Activated CD4-positive, alpha-beta T cell treated with anti-CD3 and anti-CD28 coated beads for 36 hours (primary cell): ENCODE measurements at regions of chr5 and their contacts with region 1.

Region 1: GRCh38 chr5:77076961-77077823 is 9.9 kb downstream of the ZBED3 start:
- DNase-seq: peak; percentile 82
- ATAC-seq: peak; percentile 84
- H3K4me3 Mint-ChIP-seq: peak overlapping the region; percentile 31
- H3K27ac Mint-ChIP-seq: no peak overlapping the region
- H3K4me1 Mint-ChIP-seq: peaks cover 11% of the 10 kb centered on the region
- H3K27me3 Mint-ChIP-seq: no peaks in the 10 kb centered on the region

Region 2: DNA sequence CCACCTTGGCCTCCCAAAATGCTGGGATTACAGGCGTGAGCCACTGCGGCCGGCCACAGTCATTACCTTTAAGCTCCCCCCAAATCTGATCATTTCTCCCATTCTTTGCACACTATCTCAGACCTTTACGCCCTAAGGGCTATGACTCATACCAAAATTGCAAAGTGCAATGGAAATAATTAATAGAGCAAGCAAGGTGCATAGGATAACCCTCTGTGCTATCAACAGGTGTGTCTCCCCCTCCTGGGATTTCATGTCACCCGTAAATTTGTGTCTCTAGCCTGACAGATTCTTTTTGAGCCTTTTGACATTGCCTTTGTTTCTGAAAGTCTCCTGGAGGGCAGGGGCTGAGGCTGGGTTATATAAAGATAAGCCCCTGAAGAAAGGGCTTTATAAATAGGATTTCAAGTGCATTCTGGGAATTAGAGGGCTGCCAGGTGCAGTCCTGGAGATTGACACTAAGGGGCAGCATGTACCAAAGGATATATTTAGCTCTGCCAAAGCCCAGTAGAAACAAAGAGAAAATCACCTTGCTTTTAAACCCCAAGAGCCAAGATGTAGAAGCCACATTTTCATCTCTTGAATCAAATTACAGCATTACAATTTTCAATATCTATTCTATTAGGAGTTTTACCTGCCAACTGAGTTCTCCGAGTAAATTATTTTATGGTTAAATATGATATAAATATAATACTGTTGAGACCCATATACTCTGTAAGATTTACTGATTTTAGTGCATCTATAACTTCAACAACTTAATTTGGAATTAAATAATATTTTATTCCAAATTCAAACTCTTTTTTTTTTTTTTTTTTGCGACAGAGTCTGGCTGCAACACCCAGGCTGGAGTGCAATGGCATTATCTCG is 209.1 kb before region 1 on chr5:
- CTCF ChIA-PET with region 1: interaction called, 7 read pairs
- POLR2A ChIA-PET with region 1: no interaction called
- intact Hi-C with region 1: loop called (anchors 1 kb)
- DNase-seq: peak; percentile 77
- ATAC-seq: peak; percentile 74
- H3K4me3 Mint-ChIP-seq: no peak overlapping the region
- H3K27ac Mint-ChIP-seq: no peak overlapping the region
- H3K4me1 Mint-ChIP-seq: no peaks in the 10 kb centered on the region
- H3K27me3 Mint-ChIP-seq: no peaks in the 10 kb centered on the region

Region 3: DNA sequence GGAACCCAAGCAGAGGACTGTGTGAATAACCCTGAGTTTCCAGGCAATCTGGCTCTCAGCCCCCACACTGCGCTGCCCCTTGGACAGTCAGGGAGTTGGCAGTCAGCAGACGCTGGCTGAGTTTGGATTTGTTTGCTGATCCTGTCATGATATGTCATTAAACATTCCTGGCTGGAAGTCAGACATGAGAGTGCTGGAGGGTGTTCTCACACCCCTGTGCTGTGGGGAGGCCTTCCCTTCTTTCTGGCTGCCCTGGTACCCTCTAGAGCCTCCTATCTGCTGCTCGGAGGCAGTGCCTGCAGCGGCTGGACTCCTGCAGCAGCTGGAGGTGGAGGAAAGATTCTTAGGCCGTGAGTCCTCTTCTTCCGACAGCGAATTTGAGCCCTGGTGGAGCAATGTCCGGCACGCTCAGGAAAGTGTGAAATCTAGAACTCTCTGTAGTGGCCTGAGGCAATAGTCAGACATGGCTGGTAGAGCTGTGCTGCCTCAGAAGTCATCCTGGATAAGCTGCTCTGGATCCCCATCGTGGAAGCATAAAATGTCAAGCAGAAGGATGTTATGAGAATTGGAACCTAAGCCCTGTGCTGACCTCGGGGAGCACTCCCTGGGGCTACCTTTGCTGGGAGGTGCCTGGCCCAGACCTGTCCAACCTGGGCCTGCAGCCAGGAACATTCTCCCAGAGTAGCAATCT is 205.3 kb after region 1 on chr5:
- CTCF ChIA-PET with region 1: no interaction called
- POLR2A ChIA-PET with region 1: no interaction called
- intact Hi-C with region 1: no loop called
- DNase-seq: no peak
- ATAC-seq: no peak
- H3K4me3 Mint-ChIP-seq: no peak overlapping the region
- H3K27ac Mint-ChIP-seq: no peak overlapping the region
- H3K4me1 Mint-ChIP-seq: peaks cover 7% of the 10 kb centered on the region
- H3K27me3 Mint-ChIP-seq: peaks cover 2% of the 10 kb centered on the region

Region 4: GRCh38 chr5:77816671-77817070 is 739.5 kb after region 1 on chr5:
- CTCF ChIA-PET with region 1: no interaction called
- POLR2A ChIA-PET with region 1: no interaction called
- intact Hi-C with region 1: no loop called
- DNase-seq: no peak
- ATAC-seq: no peak
- H3K4me3 Mint-ChIP-seq: no peak overlapping the region
- H3K27ac Mint-ChIP-seq: no peak overlapping the region
- H3K4me1 Mint-ChIP-seq: no peaks in the 10 kb centered on the region
- H3K27me3 Mint-ChIP-seq: no peaks in the 10 kb centered on the region

Region 5: GRCh38 chr5:77832166-77832770 is 755.1 kb after region 1 on chr5:
- CTCF ChIA-PET with region 1: no interaction called
- POLR2A ChIA-PET with region 1: no interaction called
- intact Hi-C with region 1: no loop called
- DNase-seq: no peak
- ATAC-seq: no peak
- H3K4me3 Mint-ChIP-seq: no peak overlapping the region
- H3K27ac Mint-ChIP-seq: no peak overlapping the region
- H3K4me1 Mint-ChIP-seq: no peaks in the 10 kb centered on the region
- H3K27me3 Mint-ChIP-seq: peaks cover 11% of the 10 kb centered on the region

Region 6: DNA sequence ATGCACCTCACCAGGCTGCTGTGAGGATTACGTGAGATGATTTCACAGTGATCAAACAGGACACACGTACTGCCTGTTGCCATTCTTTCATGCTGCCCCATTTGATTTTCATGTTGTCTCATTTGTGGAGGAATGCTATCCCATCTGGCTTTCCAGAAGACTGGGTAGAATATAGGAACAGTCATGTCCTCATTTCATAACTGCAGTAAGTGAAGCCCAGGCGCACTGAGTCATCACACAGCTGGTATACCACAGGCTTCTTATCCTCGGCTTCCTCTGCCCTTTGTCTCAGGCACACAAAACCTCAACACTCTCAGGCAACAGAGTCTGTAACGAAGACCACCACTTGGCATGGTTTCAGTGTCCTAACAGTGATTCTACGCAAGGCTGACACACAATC is 1509.1 kb after region 1 on chr5:
- CTCF ChIA-PET with region 1: no interaction called
- POLR2A ChIA-PET with region 1: no interaction called
- intact Hi-C with region 1: no loop called
- DNase-seq: peak; percentile 13
- ATAC-seq: no peak
- H3K4me3 Mint-ChIP-seq: no peak overlapping the region
- H3K27ac Mint-ChIP-seq: no peak overlapping the region
- H3K4me1 Mint-ChIP-seq: no peaks in the 10 kb centered on the region
- H3K27me3 Mint-ChIP-seq: no peaks in the 10 kb centered on the region